ENCODE measurements at regions of chr10 and their contacts with region 1.

Region 1: DNA sequence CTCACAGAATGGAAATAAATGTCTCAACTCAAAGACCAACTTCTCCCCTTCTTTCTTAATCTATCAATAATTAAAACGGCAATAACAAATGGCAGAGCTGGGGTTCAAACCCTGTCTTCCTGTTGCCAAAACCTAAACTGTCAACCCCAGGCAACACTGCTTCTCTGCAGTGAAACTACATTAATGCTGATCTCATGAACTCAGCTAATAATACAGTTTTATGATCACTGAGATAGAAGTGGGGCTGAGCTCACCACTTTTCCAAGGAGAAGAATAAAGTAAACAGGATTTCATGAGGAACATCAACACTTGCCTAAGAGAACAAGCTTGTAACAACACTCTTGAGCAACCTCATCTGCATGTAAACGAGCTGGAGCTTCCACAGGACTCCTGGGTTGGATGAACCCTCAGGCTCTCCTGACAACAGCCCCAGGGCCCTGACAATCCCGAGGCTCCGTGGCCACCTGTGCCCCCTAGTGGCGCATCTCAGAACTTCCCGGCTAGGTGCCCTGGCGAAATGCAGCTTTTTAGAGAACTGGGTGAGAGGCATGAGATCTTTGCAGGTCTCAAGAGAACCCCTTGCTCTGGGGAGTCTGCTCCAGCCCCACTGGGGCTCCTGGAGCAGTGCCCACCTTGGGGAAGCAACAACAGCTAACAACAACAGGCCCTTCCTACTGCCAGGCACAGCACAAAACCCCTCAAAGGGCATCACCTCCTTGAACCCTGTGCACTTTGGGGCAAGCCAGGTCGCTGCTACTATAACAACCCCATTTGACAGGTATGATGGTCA is 169.3 kb downstream of the SH3PXD2A start:
- DNase-seq: peak; percentile 82
- ATAC-seq: peak; percentile 86
- H3K4me3 Mint-ChIP-seq: no peak overlapping the region
- H3K27ac Mint-ChIP-seq: no peak overlapping the region
- H3K4me1 Mint-ChIP-seq: peaks cover 2% of the 10 kb centered on the region
- H3K27me3 Mint-ChIP-seq: peaks cover 2% of the 10 kb centered on the region

Region 2: GRCh38 chr10:103592186-103593021 is 93.7 kb before region 1 on chr10:
- CTCF ChIA-PET with region 1: interaction called, 15 read pairs
- DNase-seq: peak; percentile 65
- ATAC-seq: peak; percentile 79
- H3K4me3 Mint-ChIP-seq: no peak overlapping the region
- H3K27ac Mint-ChIP-seq: no peak overlapping the region
- H3K4me1 Mint-ChIP-seq: peaks cover 2% of the 10 kb centered on the region
- H3K27me3 Mint-ChIP-seq: no peaks in the 10 kb centered on the region

Region 3: DNA sequence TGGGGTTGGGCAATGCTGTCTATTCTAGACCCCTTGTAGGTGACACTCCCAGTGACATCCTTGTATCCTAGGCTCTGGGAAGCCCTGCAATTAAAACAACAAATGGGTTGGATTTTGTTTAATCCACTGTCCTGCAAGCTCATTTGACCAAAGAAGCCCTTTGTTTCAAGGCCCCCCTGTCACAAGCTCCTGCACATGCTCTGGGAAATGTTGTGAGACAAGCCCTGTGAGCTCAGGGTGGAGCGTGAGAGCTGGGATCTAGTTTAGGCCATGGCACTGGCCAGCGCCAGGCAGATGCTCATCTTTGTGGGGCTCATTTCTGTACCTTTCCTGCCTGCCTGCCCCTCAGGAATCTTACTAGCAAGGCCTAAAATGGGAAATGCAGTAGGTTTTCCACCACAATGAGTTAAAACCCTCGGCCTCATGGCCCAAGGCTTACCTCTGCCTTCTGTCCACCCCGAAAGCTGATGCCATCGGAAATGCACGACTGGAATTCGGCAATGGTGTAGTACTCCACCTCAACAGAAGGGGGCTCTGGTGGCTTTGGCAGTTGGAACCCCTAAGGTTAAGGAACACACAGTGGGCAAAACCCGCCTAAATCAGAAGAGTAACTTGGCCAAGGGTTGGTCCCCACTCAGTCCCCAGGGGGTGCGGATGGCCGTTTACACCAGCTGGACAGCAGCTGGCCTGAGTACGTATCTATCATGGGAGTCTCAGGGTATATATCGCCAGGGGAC is 80.5 kb before region 1 on chr10:
- CTCF ChIA-PET with region 1: interaction called, 72 read pairs
- DNase-seq: peak; percentile 62
- ATAC-seq: peak; percentile 42
- H3K4me3 Mint-ChIP-seq: no peak overlapping the region
- H3K27ac Mint-ChIP-seq: no peak overlapping the region
- H3K4me1 Mint-ChIP-seq: peaks cover 2% of the 10 kb centered on the region
- H3K27me3 Mint-ChIP-seq: no peaks in the 10 kb centered on the region

Region 4: GRCh38 chr10:103659674-103660363 is 26.3 kb before region 1 on chr10:
- CTCF ChIA-PET with region 1: interaction called, 29 read pairs
- DNase-seq: peak; percentile 80
- ATAC-seq: peak; percentile 90
- H3K4me3 Mint-ChIP-seq: peak overlapping the region; percentile 88
- H3K27ac Mint-ChIP-seq: peak overlapping the region; percentile 89
- H3K4me1 Mint-ChIP-seq: peaks cover 14% of the 10 kb centered on the region
- H3K27me3 Mint-ChIP-seq: no peaks in the 10 kb centered on the region

Region 5: GRCh38 chr10:103696411-103697145 is 10.5 kb after region 1 on chr10:
- CTCF ChIA-PET with region 1: interaction called, 42 read pairs
- DNase-seq: peak; percentile 92
- ATAC-seq: peak; percentile 91
- H3K4me3 Mint-ChIP-seq: peak overlapping the region; percentile 55
- H3K27ac Mint-ChIP-seq: peak overlapping the region; percentile 80
- H3K4me1 Mint-ChIP-seq: peaks cover 45% of the 10 kb centered on the region
- H3K27me3 Mint-ChIP-seq: no peaks in the 10 kb centered on the region

Measured in activated CD8-positive, alpha-beta memory T cell treated with anti-CD3 and anti-CD28 coated beads, Interleukin-2, amount 10 ng/mL, durations not matched to agents 7 days and 5 days (primary cell).